ENCODE measurements at regions of chr12 and their contacts with region 1.

Region 1: GRCh38 chr12:2329661-2330210 is 276.9 kb downstream of the CACNA1C start:
- DNase-seq: no peak

Region 2: GRCh38 chr12:2341871-2342270 is 12.1 kb after region 1 on chr12:
- intact Hi-C with region 1: loop called in 1 of 2 experiments (anchors 1 kb)
- DNase-seq: no peak

Region 3: DNA sequence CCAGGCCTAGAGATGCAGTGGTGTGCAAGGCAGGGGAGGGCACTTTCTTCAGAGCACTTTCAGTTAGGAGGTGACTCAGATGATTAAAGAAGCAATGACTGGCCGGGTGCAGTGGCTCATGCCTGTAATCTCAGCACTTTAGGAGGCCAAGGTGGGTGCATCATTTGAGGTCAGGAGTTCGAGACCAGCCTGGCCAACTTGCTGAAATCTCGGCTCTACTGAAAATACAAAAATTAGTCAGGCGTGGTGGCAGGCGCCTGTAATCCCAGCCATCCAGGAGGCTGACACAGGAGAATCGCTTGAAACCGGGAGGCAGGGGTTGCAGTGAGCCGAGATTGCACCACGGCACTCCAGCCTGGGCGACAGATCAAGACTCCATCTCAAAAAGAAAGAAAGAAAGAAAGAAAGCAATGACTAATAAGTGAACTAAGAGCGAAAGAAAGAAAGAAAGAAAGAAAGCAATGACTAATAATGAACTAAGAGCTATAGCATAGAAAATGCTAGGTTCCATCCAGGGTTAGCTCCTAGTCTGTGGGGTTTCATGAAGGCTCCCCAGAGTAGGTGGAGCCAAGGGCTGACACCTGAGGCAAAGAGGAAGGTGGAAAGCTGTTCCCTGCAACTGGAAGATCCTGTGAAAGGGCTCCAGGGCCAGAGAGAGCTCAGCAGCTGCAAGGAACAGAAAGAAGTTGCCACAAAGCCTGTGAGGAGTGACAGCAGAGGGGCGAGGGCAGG is 57.5 kb after region 1 on chr12:
- intact Hi-C with region 1: no loop called
- DNase-seq: peak; percentile 56

Measured in posterior vena cava (tissue), 2 donors.